MCF 10A (cell line): ENCODE measurements at regions of chr1 and their contacts with region 1.

Region 1: GRCh38 chr1:109099938-109100773 is 9.6 kb downstream of the TMEM167B start:
- DNase-seq: peak; percentile 97
- H3K4me3 Mint-ChIP-seq: peak overlapping the region; percentile 97
- H3K27ac Mint-ChIP-seq: peak overlapping the region; percentile 96
- H3K4me1 Mint-ChIP-seq: peaks cover 7% of the 10 kb centered on the region
- H3K27me3 Mint-ChIP-seq: no peaks in the 10 kb centered on the region
- CTCF ChIP-seq: peak; percentile 56

Region 2: DNA sequence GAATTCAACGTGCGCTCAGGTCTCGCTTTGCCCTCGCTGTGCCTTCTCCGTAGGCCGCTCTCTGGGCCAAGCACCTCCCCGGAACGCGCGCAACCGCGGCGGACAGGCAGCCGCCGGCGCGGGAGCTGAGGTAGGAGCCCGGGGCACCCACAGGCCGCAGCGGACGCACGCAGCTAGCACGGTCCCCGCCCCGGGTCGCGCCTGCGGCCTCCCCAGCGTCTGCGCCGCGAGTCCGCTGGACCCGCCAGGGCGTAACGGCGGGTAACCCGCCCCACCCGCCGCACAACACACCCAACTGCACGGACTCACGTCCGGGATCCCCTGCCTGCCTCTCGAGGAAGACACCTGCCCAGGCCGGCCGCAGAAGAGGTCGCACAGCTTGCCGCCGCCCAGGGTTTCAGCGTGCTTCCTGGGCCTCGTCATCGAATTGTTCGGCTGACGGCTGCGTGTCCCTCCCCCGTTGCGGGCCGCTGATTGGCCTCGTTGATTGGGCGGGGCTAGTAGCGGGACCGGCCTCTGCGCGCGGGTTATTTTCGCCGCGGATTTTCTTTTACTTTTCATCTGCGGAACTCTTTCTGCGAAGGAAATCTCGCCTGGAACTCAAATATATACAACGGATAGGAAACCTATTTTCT is 137.0 kb before region 1 on chr1 and contains the start of gene CLCC1:
- CTCF ChIA-PET with region 1: interaction called, 4 read pairs
- POLR2A ChIA-PET with region 1: interaction called, 28 read pairs
- intact Hi-C with region 1: no loop called
- DNase-seq: peak; percentile 94
- H3K4me3 Mint-ChIP-seq: peak within 1 kb of the TSS; percentile 86
- H3K27ac Mint-ChIP-seq: peak within 1 kb of the TSS; percentile 83
- H3K4me1 Mint-ChIP-seq: peaks cover 18% of the 10 kb centered on the region
- H3K27me3 Mint-ChIP-seq: no peaks in the 10 kb centered on the region
- CTCF ChIP-seq: no peak
- total RNA-seq, gene CLCC1: 36.6 and 46.3 TPM in 2 replicates

Region 3: DNA sequence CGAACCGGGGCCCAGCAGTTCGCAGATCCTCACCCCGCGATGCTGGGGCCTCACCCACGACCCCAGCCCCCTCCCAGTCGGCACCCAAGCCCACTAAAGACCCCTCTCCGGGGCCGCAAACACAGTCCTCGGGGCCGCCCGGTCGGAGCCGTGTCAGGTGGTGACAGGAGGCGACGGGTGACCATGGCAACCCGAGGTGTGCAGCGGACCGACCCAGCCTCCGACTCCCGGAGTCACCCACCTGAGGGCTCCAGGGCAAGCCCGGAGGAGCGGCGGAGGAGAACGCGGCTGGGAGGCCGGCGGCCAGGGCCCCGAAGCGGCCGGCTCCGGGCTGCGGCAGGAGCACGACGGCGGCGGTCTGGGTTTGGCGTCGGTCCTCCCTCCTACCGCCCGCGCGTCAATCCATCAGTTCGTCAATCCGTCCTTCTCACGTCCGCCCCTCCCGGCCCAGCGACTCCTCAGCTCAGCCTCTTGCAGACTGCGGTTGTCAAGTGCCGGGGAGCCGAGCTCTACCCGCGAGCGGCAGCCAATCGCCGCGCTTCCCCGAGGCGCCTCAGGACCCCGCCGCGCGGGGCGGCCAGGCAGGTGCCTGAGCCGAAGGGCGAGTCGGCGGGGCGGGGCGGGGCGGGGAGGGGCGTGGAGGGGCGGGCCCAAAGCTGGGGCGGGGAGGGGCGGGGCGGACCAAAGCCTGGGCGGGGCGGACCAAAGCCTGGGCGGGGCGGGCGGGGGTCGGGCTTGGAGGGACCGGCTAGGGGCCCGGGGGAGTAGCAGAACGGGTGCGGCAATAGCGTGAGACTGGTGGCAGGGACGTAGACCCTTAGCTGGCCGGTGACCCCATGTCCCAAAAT is 58.3 kb before region 1 on chr1 and contains the start of gene WDR47:
- CTCF ChIA-PET with region 1: interaction called, 4 read pairs
- POLR2A ChIA-PET with region 1: interaction called, 19 read pairs
- intact Hi-C with region 1: loop called (anchors 1 kb)
- DNase-seq: peak; percentile 96
- H3K4me3 Mint-ChIP-seq: peak within 1 kb of the TSS; percentile 94
- H3K27ac Mint-ChIP-seq: peak within 1 kb of the TSS; percentile 78
- H3K4me1 Mint-ChIP-seq: peaks cover 6% of the 10 kb centered on the region
- H3K27me3 Mint-ChIP-seq: no peaks in the 10 kb centered on the region
- CTCF ChIP-seq: no peak
- total RNA-seq, gene WDR47: 16.1 and 17.8 TPM in 2 replicates

Region 4: DNA sequence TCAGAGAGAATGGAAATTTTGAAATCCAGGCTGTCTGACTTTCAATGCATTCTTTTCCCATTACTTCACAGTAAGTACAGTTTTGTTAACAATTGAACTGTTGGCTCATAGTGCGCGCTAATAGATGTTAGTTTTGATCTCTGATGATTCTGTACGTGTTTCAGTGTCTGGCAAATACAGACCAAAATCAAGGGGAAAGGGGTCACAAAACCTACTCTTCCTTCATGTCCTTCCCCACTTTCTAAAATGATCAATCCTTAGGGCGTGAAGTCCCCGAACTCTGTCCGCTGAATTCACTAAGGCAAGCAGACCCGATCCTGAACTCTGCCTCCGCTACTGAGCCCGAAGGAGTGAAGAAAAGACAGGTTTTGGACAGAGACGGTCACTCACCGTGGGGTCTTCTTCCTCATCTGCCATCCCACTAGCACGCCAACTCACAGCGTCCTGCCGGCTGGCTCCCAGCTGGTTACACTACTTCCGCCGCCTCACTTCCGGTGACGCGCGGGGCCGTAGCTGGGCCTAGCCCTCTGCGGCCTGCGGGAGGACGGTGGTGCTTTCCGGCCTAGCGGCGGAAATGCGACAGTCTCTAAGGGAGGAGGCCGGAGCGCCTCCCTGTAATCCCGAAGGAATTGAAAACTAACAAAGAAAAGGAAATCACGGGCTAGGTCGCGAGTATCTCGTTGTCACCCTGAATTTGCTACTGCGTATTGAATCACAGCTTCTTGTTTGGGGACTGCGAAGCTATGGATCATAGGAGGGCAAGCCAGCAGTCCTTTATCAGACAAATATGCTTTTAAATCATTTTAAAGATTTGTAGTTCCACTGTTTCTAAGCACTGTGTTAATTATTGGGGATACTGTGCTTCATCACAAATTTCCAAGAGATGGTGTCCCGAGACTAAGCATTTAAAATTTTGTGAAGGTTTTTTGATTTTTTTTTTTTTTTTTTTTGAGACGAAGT is 24.3 kb before region 1 on chr1 and contains the start of gene TAF13:
- CTCF ChIA-PET with region 1: interaction called, 9 read pairs
- POLR2A ChIA-PET with region 1: interaction called, 37 read pairs
- intact Hi-C with region 1: no loop called
- DNase-seq: peak; percentile 93
- H3K4me3 Mint-ChIP-seq: peak within 1 kb of the TSS; percentile 99
- H3K27ac Mint-ChIP-seq: peak within 1 kb of the TSS; percentile 100
- H3K4me1 Mint-ChIP-seq: peaks cover 5% of the 10 kb centered on the region
- H3K27me3 Mint-ChIP-seq: no peaks in the 10 kb centered on the region
- CTCF ChIP-seq: no peak
- total RNA-seq, gene TAF13: 76.7 and 88.2 TPM in 2 replicates

Region 5: DNA sequence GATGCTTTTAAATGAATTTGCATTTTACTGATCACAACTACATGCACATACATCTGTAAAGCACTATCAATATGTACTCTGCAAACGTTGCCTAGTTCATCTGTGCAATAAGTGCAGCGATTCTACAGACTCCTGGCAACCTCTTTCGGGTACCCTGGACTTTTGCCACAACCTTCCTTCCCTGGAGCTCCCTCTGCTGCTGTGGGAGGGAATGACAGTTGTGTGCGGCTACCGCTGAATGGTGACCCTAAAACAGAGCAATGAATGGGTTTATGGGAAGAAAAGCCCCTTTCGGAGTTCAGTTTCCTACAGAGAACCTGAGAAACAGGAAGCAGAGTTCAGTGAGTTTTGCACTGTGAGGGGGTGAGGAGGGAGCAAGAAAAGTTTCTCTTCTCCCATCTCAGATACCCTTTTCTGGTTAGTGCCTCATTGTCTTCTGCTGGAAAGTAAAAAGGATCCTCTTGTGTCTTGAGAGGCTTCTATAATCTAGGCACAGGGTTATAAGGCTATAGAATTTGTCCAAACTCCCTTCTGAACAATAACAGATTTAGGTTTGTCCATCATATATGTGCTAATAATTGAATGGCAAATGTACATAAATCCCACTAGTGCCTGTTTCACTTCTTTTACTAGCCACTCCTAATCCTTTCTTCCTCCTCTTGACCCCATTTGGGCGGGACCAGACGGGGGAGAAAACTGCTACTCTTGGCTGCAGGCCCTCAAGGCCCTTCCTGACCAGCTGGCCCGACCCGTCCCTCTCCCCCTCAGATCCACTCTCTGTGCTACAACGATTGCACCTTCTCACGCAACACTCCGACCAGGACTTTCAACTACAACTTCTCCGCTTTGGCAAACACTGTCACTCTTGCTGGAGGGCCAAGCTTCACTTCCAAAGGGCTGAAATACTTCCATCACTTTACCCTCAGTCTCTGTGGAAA is 93.8 kb after region 1 on chr1:
- CTCF ChIA-PET with region 1: interaction called, 5 read pairs
- POLR2A ChIA-PET with region 1: interaction called, 12 read pairs
- intact Hi-C with region 1: no loop called
- DNase-seq: peak; percentile 58
- H3K4me3 Mint-ChIP-seq: no peak overlapping the region
- H3K27ac Mint-ChIP-seq: no peak overlapping the region
- H3K4me1 Mint-ChIP-seq: peaks cover 24% of the 10 kb centered on the region
- H3K27me3 Mint-ChIP-seq: no peaks in the 10 kb centered on the region
- CTCF ChIP-seq: peak; percentile 59